Mammary epithelial cell (primary cell): ENCODE measurements at regions of chr20 and their contacts with region 1.

Region 1: DNA sequence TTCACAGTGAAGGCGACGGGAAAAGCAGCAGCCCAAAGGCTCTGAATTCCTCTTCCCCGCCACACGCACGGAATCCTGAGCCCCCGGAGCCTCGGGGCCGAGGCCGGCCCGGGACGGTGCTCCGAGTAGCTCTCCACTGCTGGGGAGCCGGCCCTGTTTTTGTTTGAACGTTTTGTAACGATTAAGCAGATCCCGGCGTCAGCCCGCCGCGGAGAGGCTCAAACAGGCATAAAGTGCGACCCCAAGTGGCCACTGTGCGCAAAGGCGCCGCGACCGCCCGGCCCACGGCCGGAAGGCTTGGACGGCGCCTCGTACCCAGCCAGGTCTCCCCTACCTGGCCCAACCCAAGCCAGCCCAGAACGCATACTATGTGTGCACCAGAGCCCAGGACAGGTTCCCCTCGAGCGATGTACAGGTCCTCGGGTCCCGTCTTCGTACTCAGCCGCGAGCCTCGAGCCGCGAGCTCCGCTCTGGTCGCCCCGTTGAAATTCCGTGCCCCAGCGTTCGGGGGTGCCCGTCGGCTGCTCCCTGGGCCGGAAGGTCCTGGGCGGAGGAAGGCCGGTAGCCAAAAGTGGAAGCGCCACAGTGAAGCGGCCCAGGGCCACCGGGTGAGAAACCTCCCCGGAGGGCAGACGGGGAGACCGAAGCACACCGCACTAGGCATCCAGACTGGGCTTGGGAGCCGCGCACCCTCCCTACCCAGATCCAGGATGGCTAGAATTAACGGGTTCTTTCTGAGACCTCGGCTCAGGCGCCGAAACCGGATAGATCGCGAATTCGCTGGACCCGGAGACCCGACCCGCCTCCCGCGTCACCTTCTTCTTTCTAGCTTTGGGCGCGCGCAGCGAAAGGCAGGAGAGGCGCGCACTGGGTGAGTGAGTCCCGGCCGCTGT is 1.2 kb upstream of the MAFB start:
- DNase-seq: peak; percentile 79
- H3K4me3 ChIP-seq: peak overlapping the region; percentile 63 to 67 (median 65)
- H3K27ac ChIP-seq: no peak overlapping the region
- H3K4me1 ChIP-seq: peaks cover 23% of the 10 kb centered on the region
- H3K27me3 ChIP-seq: peaks cover 17% of the 10 kb centered on the region
- CTCF ChIP-seq: peak; percentile 73 to 85

Region 2: GRCh38 chr20:39264506-39265172 is 1425.5 kb before region 1 on chr20:
- CTCF ChIA-PET with region 1: no interaction called
- dilution Hi-C with region 1: no loop called
- in situ Hi-C with region 1: loop called in 1 of 2 experiments (anchors 25 kb)
- intact Hi-C with region 1: no loop called
- DNase-seq: peak; percentile 83
- H3K4me3 ChIP-seq: no peak overlapping the region
- H3K27ac ChIP-seq: no peak overlapping the region
- H3K4me1 ChIP-seq: no peaks in the 10 kb centered on the region
- H3K27me3 ChIP-seq: no peaks in the 10 kb centered on the region
- CTCF ChIP-seq: peak; percentile 92 to 97

Region 3: DNA sequence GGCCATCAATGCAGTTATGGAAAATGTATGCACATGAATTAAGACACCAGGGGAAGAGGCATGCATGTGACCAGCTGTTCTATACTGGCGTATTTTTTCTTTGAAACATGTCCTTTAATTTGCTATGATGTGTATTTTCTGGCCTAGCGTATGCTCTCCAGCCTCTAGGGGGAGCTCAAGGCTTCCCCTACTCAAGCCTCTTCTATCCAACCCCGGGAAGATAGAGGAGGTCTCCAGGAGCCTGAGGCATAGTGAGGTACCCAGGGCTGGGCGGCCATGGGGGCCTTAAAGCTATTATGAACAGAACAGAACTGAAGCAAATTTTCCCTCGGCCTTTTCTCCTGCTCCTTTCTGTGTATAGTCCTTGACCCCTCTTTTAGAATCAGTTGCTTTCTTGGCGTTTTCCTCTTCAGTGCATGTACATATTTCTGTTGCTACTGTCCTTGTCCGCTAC is 530.1 kb before region 1 on chr20:
- CTCF ChIA-PET with region 1: no interaction called
- dilution Hi-C with region 1: no loop called
- in situ Hi-C with region 1: no loop called
- intact Hi-C with region 1: loop called (anchors 1 kb)
- DNase-seq: peak; percentile 41
- H3K4me3 ChIP-seq: no peak overlapping the region
- H3K27ac ChIP-seq: no peak overlapping the region
- H3K4me1 ChIP-seq: no peaks in the 10 kb centered on the region
- H3K27me3 ChIP-seq: no peaks in the 10 kb centered on the region
- CTCF ChIP-seq: peak; percentile 90 to 93

Region 4: DNA sequence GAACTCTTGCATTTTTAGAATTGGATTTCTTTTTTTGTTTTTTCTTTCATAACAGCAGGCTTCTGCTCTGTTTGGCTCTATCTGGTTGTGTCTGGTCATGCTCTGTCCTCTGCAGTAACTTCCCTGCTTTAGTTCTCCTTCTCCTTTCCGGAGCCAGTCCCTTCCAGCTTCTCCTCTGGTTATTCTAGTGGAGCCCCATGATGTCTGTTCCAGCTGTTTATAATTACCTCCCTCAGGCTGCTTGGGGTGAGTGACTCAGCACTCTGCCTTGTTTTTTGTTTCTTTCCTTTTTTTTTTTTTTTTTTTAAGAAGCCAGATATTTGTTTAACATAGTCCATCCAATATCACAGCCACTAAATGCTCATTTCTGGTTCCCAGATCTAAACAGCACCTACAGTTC is 410.8 kb before region 1 on chr20:
- CTCF ChIA-PET with region 1: interaction called, 26 read pairs
- dilution Hi-C with region 1: no loop called
- in situ Hi-C with region 1: no loop called
- intact Hi-C with region 1: no loop called
- DNase-seq: peak; percentile 67
- H3K4me3 ChIP-seq: no peak overlapping the region
- H3K27ac ChIP-seq: no peak overlapping the region
- H3K4me1 ChIP-seq: peaks cover 17% of the 10 kb centered on the region
- H3K27me3 ChIP-seq: no peaks in the 10 kb centered on the region
- CTCF ChIP-seq: no peak

Region 5: GRCh38 chr20:40323361-40323794 is 366.8 kb before region 1 on chr20:
- CTCF ChIA-PET with region 1: no interaction called
- dilution Hi-C with region 1: no loop called
- in situ Hi-C with region 1: no loop called
- intact Hi-C with region 1: no loop called
- DNase-seq: peak; percentile 14
- H3K4me3 ChIP-seq: no peak overlapping the region
- H3K27ac ChIP-seq: no peak overlapping the region
- H3K4me1 ChIP-seq: peaks cover 5% of the 10 kb centered on the region
- H3K27me3 ChIP-seq: no peaks in the 10 kb centered on the region
- CTCF ChIP-seq: no peak

Region 6: GRCh38 chr20:40532103-40532502 is 158.1 kb before region 1 on chr20:
- CTCF ChIA-PET with region 1: no interaction called
- dilution Hi-C with region 1: no loop called
- in situ Hi-C with region 1: no loop called
- intact Hi-C with region 1: loop called (anchors 10 kb)
- DNase-seq: peak; percentile 32
- H3K4me3 ChIP-seq: no peak overlapping the region
- H3K27ac ChIP-seq: no peak overlapping the region
- H3K4me1 ChIP-seq: no peaks in the 10 kb centered on the region
- H3K27me3 ChIP-seq: no peaks in the 10 kb centered on the region
- CTCF ChIP-seq: peak; percentile 48 to 58